CD14-positive monocyte (primary cell): ENCODE measurements at regions of chr7 and their contacts with region 1.

Region 1: GRCh38 chr7:44885394-44886317 is at the start of gene PURB:
- DNase-seq: peak; percentile 99 to 100 (median 99)
- H3K4me3 ChIP-seq: peak within 1 kb of the TSS; percentile 63 to 78 (median 76)
- H3K4me3 Mint-ChIP-seq: peak within 1 kb of the TSS; percentile 94 to 99
- H3K27ac ChIP-seq: peak within 1 kb of the TSS; percentile 98 to 99
- H3K27ac Mint-ChIP-seq: peak within 1 kb of the TSS; percentile 98 to 100 (median 100)
- H3K4me1 ChIP-seq: peaks cover 54 to 65% of the 10 kb centered on the region in 2 donors
- H3K4me1 Mint-ChIP-seq: peaks cover 62% of the 10 kb centered on the region
- H3K27me3 ChIP-seq: no peaks in the 10 kb centered on the region
- H3K27me3 Mint-ChIP-seq: peaks cover 0 to 7% (median 0%) of the 10 kb centered on the region in 3 donors
- CTCF ChIP-seq: no peak
- polyA plus RNA-seq, gene PURB: 3.0 to 13.0 (median 3.0) TPM

Region 2: DNA sequence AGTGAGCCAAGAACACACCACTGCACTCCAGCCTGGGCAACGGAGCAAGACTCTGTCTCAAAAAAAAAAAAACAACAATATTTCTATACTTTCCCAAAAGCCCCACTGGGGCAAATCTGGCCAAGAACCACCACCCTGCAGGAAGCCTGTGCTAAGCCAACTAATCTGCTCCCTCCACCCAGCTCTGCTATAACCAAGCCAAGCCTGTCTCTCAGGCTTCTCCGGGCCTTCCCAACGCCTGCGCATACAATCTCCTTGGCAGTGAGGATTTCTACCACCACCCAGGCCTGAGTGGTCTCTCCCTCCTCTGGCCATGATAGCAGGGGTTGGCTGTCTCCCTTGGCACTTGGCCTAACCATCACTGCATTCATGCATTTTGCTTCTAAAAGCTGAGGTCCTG is 326.2 kb before region 1 on chr7:
- intact Hi-C with region 1: no loop called
- DNase-seq: no peak
- H3K4me3 ChIP-seq: no peak overlapping the region
- H3K4me3 Mint-ChIP-seq: no peak overlapping the region
- H3K27ac ChIP-seq: no peak overlapping the region
- H3K27ac Mint-ChIP-seq: no peak overlapping the region
- H3K4me1 ChIP-seq: no peaks in the 10 kb centered on the region
- H3K4me1 Mint-ChIP-seq: no peaks in the 10 kb centered on the region
- H3K27me3 ChIP-seq: no peaks in the 10 kb centered on the region
- H3K27me3 Mint-ChIP-seq: peaks cover 1 to 10% (median 6%) of the 10 kb centered on the region in 3 donors
- CTCF ChIP-seq: no peak

Region 3: DNA sequence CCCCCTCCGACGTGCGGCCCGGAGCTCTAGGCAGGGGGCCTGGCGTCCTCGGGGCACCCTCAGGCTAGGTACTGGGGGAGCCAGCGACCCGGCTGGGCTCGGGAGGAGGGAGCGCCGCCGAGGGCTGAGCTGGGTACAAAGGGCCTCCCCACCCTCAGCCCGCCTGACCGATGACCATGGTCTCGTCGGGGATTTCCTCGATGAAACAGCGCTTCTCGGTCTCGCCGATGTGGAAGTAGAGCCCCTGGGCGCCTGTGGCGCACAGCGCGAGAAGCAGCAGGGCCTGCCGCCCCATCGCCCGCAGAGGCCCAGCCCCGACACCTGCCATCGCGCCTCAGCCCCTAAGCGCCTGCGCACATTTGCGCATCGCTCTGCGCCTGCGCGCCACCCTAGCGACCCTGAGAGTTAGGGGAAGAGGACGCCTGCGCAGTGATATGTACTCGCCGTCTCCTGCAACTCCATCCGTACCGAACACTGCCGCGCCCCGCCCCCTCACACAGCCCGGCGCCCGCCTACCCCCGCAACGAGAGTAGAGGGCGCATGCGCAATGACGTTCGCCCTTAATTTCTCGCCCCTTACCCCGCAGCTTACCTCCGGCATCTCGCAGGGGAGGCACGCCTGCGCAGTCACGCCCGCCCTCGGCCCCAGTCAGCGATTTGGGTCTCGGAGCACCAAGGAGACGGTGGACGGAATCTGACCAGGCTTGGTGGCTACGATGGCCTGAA is 303.6 kb before region 1 on chr7 and contains the start of gene TMED4:
- intact Hi-C with region 1: loop called in 1 of 2 experiments (anchors 10 kb)
- DNase-seq: peak; percentile 99
- H3K4me3 ChIP-seq: peak within 1 kb of the TSS; percentile 69 to 90 (median 81)
- H3K4me3 Mint-ChIP-seq: peak within 1 kb of the TSS; percentile 87 to 95
- H3K27ac ChIP-seq: peak within 1 kb of the TSS; percentile 94 to 99
- H3K27ac Mint-ChIP-seq: peak within 1 kb of the TSS; percentile 97 to 99 (median 99)
- H3K4me1 ChIP-seq: peaks cover 18 to 22% of the 10 kb centered on the region in 2 donors
- H3K4me1 Mint-ChIP-seq: peaks cover 20% of the 10 kb centered on the region
- H3K27me3 ChIP-seq: no peaks in the 10 kb centered on the region
- H3K27me3 Mint-ChIP-seq: no peaks in the 10 kb centered on the region
- CTCF ChIP-seq: no peak
- polyA plus RNA-seq, gene TMED4: 45.7 to 76.7 (median 49.0) TPM

Region 4: GRCh38 chr7:44787041-44787440 is 98.6 kb before region 1 on chr7:
- intact Hi-C with region 1: no loop called
- DNase-seq: no peak
- H3K4me3 ChIP-seq: no peak overlapping the region
- H3K4me3 Mint-ChIP-seq: no peak overlapping the region
- H3K27ac ChIP-seq: no peak overlapping the region
- H3K27ac Mint-ChIP-seq: no peak overlapping the region
- H3K4me1 ChIP-seq: no peaks in the 10 kb centered on the region
- H3K4me1 Mint-ChIP-seq: no peaks in the 10 kb centered on the region
- H3K27me3 ChIP-seq: no peaks in the 10 kb centered on the region
- H3K27me3 Mint-ChIP-seq: peaks cover 0 to 1% (median 0%) of the 10 kb centered on the region in 3 donors
- CTCF ChIP-seq: no peak

Region 5: DNA sequence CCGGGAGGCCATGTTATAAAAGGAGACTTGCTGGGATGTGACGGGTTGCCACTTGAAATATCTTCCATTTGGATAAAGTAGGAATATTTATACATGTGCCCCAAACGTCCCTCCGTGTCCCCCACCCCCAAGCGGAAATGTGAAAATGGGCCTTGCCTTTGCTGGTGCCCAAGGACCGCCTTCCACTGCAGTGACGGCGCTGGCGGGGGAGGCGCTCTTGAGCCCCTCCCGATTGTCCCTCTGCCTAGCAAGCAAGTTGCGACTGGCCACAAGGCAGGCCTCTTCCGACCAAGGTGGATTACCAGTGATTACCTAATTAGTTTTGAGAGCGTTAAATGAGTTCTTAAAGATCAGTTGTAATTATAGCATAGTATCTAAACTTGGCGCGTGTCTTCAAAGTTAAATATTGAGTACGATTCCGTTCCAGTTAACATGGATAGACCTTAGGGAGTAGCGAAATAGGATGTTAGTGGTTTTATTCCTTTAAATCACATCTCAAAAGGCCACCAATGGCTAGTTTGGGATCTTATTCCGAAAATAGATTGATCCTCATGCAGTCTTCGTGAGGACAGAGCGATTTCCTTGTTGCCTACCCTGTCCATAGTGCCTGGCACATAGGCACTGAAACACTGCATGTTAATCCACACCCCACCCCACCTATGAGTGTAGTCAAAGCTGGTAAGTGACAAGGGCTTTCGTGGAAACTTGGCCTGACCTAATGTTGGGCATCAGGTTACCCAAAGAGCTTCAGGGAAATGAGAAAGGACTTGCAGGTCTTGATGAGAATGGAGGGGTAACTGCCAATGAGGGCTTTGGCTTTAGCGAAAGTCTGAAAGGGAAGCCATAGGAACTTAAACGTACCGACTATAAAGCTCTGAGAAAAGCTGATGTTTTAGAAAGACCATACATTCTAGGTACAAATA is 88.1 kb before region 1 on chr7:
- intact Hi-C with region 1: loop called in 1 of 2 experiments (anchors 2 kb)
- DNase-seq: peak; percentile 78 to 86 (median 80)
- H3K4me3 ChIP-seq: peak overlapping the region; percentile 70 to 85 (median 82)
- H3K4me3 Mint-ChIP-seq: peak overlapping the region; percentile 92 to 96
- H3K27ac ChIP-seq: peak overlapping the region; percentile 94 to 95
- H3K27ac Mint-ChIP-seq: peak overlapping the region; percentile 97 to 99 (median 98)
- H3K4me1 ChIP-seq: peaks cover 23 to 30% of the 10 kb centered on the region in 2 donors
- H3K4me1 Mint-ChIP-seq: peaks cover 19% of the 10 kb centered on the region
- H3K27me3 ChIP-seq: no peaks in the 10 kb centered on the region
- H3K27me3 Mint-ChIP-seq: peaks cover 0 to 1% (median 0%) of the 10 kb centered on the region in 3 donors
- CTCF ChIP-seq: peak; percentile 63

Region 6: GRCh38 chr7:44914992-44915607 is 29.4 kb after region 1 on chr7:
- intact Hi-C with region 1: loop called in 1 of 2 experiments (anchors 5 kb)
- DNase-seq: peak; percentile 62 to 84 (median 64)
- H3K4me3 ChIP-seq: no peak overlapping the region
- H3K4me3 Mint-ChIP-seq: no peak overlapping the region
- H3K27ac ChIP-seq: peak overlapping the region in 1 of 2 donors; percentile 16
- H3K27ac Mint-ChIP-seq: peak overlapping the region in 3 of 7 donors; percentile 41 to 79 (median 57)
- H3K4me1 ChIP-seq: no peaks in the 10 kb centered on the region
- H3K4me1 Mint-ChIP-seq: peaks cover 3% of the 10 kb centered on the region
- H3K27me3 ChIP-seq: no peaks in the 10 kb centered on the region
- H3K27me3 Mint-ChIP-seq: peaks cover 0 to 6% (median 1%) of the 10 kb centered on the region in 3 donors
- CTCF ChIP-seq: no peak

Region 7: DNA sequence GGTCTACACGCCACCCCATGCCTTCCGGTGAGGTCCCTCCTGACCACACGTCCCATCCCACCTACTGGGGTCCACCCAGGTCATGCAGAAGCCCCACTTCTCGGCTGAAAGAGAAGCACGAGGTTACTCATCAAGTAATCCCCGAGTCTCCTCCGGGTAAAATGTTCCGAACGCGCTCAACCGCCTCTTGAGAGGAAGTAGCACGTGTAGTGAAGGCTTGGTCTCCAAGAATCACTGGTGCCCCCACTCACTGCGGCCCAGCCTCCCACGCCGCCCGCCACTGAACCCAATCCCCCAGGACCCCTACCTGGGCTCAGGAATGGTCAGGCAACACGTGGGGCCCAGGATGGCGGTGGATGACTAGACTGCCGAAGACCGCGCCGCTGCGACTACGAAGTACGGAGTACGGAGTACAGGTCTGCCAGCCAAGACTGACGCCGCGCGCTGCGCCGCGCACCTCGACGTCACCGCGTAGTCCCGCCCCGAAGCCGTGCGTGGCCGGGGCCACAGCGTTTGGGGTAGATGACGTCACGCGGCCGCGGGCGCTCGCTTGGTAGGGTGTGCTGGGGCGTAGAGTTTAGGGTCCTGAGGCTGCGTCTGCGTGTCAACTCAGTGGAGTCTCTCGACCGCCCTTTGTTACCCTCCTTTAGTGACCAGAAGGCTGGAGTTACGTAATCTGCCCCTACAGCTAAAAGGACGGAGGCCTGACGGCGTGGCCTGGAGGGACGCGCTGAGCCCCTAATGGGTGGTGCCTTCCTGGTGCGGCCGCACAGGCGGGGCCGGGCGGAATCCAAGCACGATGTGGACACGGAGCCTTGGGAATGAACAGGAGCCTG is 100.8 kb after region 1 on chr7:
- intact Hi-C with region 1: loop called in 1 of 2 experiments (anchors 10 kb)
- DNase-seq: peak; percentile 94 to 98 (median 97)
- H3K4me3 ChIP-seq: peak overlapping the region; percentile 72 to 88 (median 81)
- H3K4me3 Mint-ChIP-seq: peak overlapping the region; percentile 98 to 100
- H3K27ac ChIP-seq: peak overlapping the region; percentile 78 to 92
- H3K27ac Mint-ChIP-seq: peak overlapping the region; percentile 97 to 100 (median 99)
- H3K4me1 ChIP-seq: peaks cover 35 to 42% of the 10 kb centered on the region in 2 donors
- H3K4me1 Mint-ChIP-seq: peaks cover 46% of the 10 kb centered on the region
- H3K27me3 ChIP-seq: no peaks in the 10 kb centered on the region
- H3K27me3 Mint-ChIP-seq: peaks cover 0 to 2% (median 0%) of the 10 kb centered on the region in 3 donors
- CTCF ChIP-seq: no peak

Region 8: GRCh38 chr7:45111298-45112223 is 225.9 kb after region 1 on chr7 and contains the start of gene TBRG4:
- intact Hi-C with region 1: loop called in 1 of 2 experiments (anchors 5 kb)
- DNase-seq: peak; percentile 92 to 96 (median 94)
- H3K4me3 ChIP-seq: peak within 1 kb of the TSS; percentile 64 to 86 (median 85)
- H3K4me3 Mint-ChIP-seq: peak within 1 kb of the TSS; percentile 98 to 99
- H3K27ac ChIP-seq: peak within 1 kb of the TSS; percentile 93 to 98
- H3K27ac Mint-ChIP-seq: peak within 1 kb of the TSS; percentile 98 to 99 (median 99)
- H3K4me1 ChIP-seq: peaks cover 25 to 49% of the 10 kb centered on the region in 2 donors
- H3K4me1 Mint-ChIP-seq: peaks cover 44% of the 10 kb centered on the region
- H3K27me3 ChIP-seq: no peaks in the 10 kb centered on the region
- H3K27me3 Mint-ChIP-seq: peaks cover 0 to 5% (median 2%) of the 10 kb centered on the region in 3 donors
- CTCF ChIP-seq: peak; percentile 24
- polyA plus RNA-seq, gene TBRG4: 32.7 to 42.2 (median 38.4) TPM